CD4-positive, alpha-beta T cell (primary cell): ENCODE measurements at regions of chr5 and their contacts with region 1.

Region 1: GRCh38 chr5:83564069-83564749 is 92.7 kb downstream of the VCAN start:
- DNase-seq: peak in 3 of 14 experiments; percentile 36 to 55 (median 45)
- ATAC-seq: no peak
- H3K4me3 ChIP-seq: no peak overlapping the region
- H3K4me3 Mint-ChIP-seq: no peak overlapping the region
- H3K27ac ChIP-seq: no peak overlapping the region
- H3K27ac Mint-ChIP-seq: no peak overlapping the region
- H3K4me1 ChIP-seq: no peaks in the 10 kb centered on the region
- H3K4me1 Mint-ChIP-seq: no peaks in the 10 kb centered on the region
- H3K27me3 ChIP-seq: peaks cover 0 to 9% of the 10 kb centered on the region in 2 experiments
- H3K27me3 Mint-ChIP-seq: peaks cover 30% of the 10 kb centered on the region
- CTCF ChIP-seq: peak; percentile 67

Region 2: GRCh38 chr5:82174128-82174918 is 1389.9 kb before region 1 on chr5:
- CTCF ChIA-PET with region 1: no interaction called
- POLR2A ChIA-PET with region 1: no interaction called
- intact Hi-C with region 1: loop called in 1 of 2 experiments (anchors 10 kb)
- DNase-seq: peak; percentile 20 to 66 (median 42)
- ATAC-seq: peak; percentile 52
- H3K4me3 ChIP-seq: no peak overlapping the region
- H3K4me3 Mint-ChIP-seq: no peak overlapping the region
- H3K27ac ChIP-seq: no peak overlapping the region
- H3K27ac Mint-ChIP-seq: no peak overlapping the region
- H3K4me1 ChIP-seq: no peaks in the 10 kb centered on the region
- H3K4me1 Mint-ChIP-seq: no peaks in the 10 kb centered on the region
- H3K27me3 ChIP-seq: no peaks in the 10 kb centered on the region
- H3K27me3 Mint-ChIP-seq: no peaks in the 10 kb centered on the region
- CTCF ChIP-seq: peak; percentile 76

Region 3: GRCh38 chr5:82312373-82312856 is 1251.8 kb before region 1 on chr5:
- CTCF ChIA-PET with region 1: no interaction called
- POLR2A ChIA-PET with region 1: no interaction called
- intact Hi-C with region 1: loop called in 1 of 2 experiments (anchors 1 kb)
- DNase-seq: peak in 8 of 14 experiments; percentile 1 to 55 (median 29)
- ATAC-seq: no peak
- H3K4me3 ChIP-seq: no peak overlapping the region
- H3K4me3 Mint-ChIP-seq: no peak overlapping the region
- H3K27ac ChIP-seq: no peak overlapping the region
- H3K27ac Mint-ChIP-seq: no peak overlapping the region
- H3K4me1 ChIP-seq: no peaks in the 10 kb centered on the region
- H3K4me1 Mint-ChIP-seq: no peaks in the 10 kb centered on the region
- H3K27me3 ChIP-seq: no peaks in the 10 kb centered on the region
- H3K27me3 Mint-ChIP-seq: peaks cover 4% of the 10 kb centered on the region
- CTCF ChIP-seq: no peak

Region 4: DNA sequence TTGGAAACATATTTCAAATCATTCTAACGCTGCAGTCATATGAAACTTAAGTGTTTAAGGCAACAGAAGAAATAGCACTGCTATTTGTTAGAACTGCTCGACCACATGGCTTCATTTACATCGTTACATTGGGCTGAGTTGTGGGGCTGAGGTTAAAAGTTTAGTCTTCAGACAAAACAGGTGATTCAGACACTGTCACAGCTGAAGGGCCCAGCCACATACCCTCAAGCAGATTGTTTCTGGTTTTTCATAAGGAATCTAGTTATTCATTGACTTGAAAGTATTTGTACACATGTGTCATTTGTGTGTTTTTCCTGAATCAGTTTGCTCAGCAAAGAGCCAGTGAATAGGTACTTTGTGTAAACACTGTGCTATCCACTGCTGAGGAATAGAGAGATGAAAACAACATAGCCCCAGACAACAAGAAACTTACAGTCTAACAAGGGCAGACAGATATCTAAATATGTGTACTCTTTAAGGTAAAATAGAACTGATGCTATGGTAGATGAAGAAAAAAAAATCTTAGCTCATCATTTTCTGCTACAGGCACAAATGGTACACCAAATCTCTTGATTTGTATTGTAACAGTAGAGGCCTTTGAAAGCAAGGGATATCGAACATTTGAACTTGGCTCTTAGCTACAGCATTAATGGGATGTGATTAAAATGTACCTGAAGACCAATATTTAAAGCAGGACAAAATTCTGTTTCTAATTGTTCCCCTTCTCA is 928.5 kb before region 1 on chr5:
- CTCF ChIA-PET with region 1: no interaction called
- POLR2A ChIA-PET with region 1: no interaction called
- intact Hi-C with region 1: loop called in 1 of 2 experiments (anchors 5 kb)
- DNase-seq: no peak
- ATAC-seq: no peak
- H3K4me3 ChIP-seq: no peak overlapping the region
- H3K4me3 Mint-ChIP-seq: no peak overlapping the region
- H3K27ac ChIP-seq: no peak overlapping the region
- H3K27ac Mint-ChIP-seq: no peak overlapping the region
- H3K4me1 ChIP-seq: no peaks in the 10 kb centered on the region
- H3K4me1 Mint-ChIP-seq: no peaks in the 10 kb centered on the region
- H3K27me3 ChIP-seq: no peaks in the 10 kb centered on the region
- H3K27me3 Mint-ChIP-seq: no peaks in the 10 kb centered on the region
- CTCF ChIP-seq: no peak

Region 5: GRCh38 chr5:82641331-82642003 is 922.7 kb before region 1 on chr5:
- CTCF ChIA-PET with region 1: interaction called, 3 read pairs
- POLR2A ChIA-PET with region 1: no interaction called
- intact Hi-C with region 1: loop called (anchors 1 to 5 kb)
- DNase-seq: peak in 3 of 14 experiments; percentile 39 to 54 (median 53)
- ATAC-seq: no peak
- H3K4me3 ChIP-seq: no peak overlapping the region
- H3K4me3 Mint-ChIP-seq: no peak overlapping the region
- H3K27ac ChIP-seq: no peak overlapping the region
- H3K27ac Mint-ChIP-seq: no peak overlapping the region
- H3K4me1 ChIP-seq: no peaks in the 10 kb centered on the region
- H3K4me1 Mint-ChIP-seq: no peaks in the 10 kb centered on the region
- H3K27me3 ChIP-seq: no peaks in the 10 kb centered on the region
- H3K27me3 Mint-ChIP-seq: no peaks in the 10 kb centered on the region
- CTCF ChIP-seq: peak; percentile 48

Region 6: GRCh38 chr5:82793808-82794419 is 770.3 kb before region 1 on chr5:
- CTCF ChIA-PET with region 1: no interaction called
- POLR2A ChIA-PET with region 1: no interaction called
- intact Hi-C with region 1: loop called in 1 of 2 experiments (anchors 10 kb)
- DNase-seq: peak in 11 of 14 experiments; percentile 2 to 54 (median 17)
- ATAC-seq: no peak
- H3K4me3 ChIP-seq: no peak overlapping the region
- H3K4me3 Mint-ChIP-seq: no peak overlapping the region
- H3K27ac ChIP-seq: no peak overlapping the region
- H3K27ac Mint-ChIP-seq: no peak overlapping the region
- H3K4me1 ChIP-seq: no peaks in the 10 kb centered on the region
- H3K4me1 Mint-ChIP-seq: no peaks in the 10 kb centered on the region
- H3K27me3 ChIP-seq: peaks cover 0 to 6% of the 10 kb centered on the region in 2 experiments
- H3K27me3 Mint-ChIP-seq: no peaks in the 10 kb centered on the region
- CTCF ChIP-seq: peak; percentile 74

Region 7: GRCh38 chr5:83498585-83498984 is 65.6 kb before region 1 on chr5:
- CTCF ChIA-PET with region 1: no interaction called
- POLR2A ChIA-PET with region 1: no interaction called
- intact Hi-C with region 1: no loop called
- DNase-seq: no peak
- ATAC-seq: no peak
- H3K4me3 ChIP-seq: no peak overlapping the region
- H3K4me3 Mint-ChIP-seq: no peak overlapping the region
- H3K27ac ChIP-seq: no peak overlapping the region
- H3K27ac Mint-ChIP-seq: no peak overlapping the region
- H3K4me1 ChIP-seq: no peaks in the 10 kb centered on the region
- H3K4me1 Mint-ChIP-seq: no peaks in the 10 kb centered on the region
- H3K27me3 ChIP-seq: peaks cover 0 to 4% of the 10 kb centered on the region in 2 experiments
- H3K27me3 Mint-ChIP-seq: peaks cover 14% of the 10 kb centered on the region
- CTCF ChIP-seq: no peak

Region 8: DNA sequence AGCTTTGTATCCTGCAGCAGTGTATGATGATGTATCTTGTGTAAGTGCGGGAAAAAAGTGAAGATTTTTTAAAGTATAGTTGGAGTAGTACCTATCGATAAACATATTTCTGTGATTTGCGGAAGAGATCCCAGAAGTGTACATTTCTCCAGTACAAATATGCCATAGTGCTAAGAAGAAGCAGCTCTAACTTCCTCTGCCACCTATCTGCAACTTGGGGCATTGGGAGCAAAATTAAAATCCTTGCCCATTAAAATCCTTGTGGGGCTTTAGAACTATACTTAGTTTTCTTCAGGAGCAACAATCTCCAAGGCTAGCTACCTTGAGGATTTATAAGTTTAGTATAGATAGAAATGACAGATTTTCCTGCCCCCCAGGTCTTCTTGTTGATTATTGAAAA is 31.0 kb after region 1 on chr5:
- CTCF ChIA-PET with region 1: no interaction called
- POLR2A ChIA-PET with region 1: no interaction called
- intact Hi-C with region 1: no loop called
- DNase-seq: no peak
- ATAC-seq: no peak
- H3K4me3 ChIP-seq: no peak overlapping the region
- H3K4me3 Mint-ChIP-seq: no peak overlapping the region
- H3K27ac ChIP-seq: no peak overlapping the region
- H3K27ac Mint-ChIP-seq: no peak overlapping the region
- H3K4me1 ChIP-seq: no peaks in the 10 kb centered on the region
- H3K4me1 Mint-ChIP-seq: no peaks in the 10 kb centered on the region
- H3K27me3 ChIP-seq: no peaks in the 10 kb centered on the region
- H3K27me3 Mint-ChIP-seq: no peaks in the 10 kb centered on the region
- CTCF ChIP-seq: no peak